Posterior vena cava (tissue), 2 donors: ENCODE measurements at regions of chr5 and their contacts with region 1.

Region 1: GRCh38 chr5:149471406-149472183 is 79.6 kb downstream of the CSNK1A1 start:
- DNase-seq: peak; percentile 81

Region 2: DNA sequence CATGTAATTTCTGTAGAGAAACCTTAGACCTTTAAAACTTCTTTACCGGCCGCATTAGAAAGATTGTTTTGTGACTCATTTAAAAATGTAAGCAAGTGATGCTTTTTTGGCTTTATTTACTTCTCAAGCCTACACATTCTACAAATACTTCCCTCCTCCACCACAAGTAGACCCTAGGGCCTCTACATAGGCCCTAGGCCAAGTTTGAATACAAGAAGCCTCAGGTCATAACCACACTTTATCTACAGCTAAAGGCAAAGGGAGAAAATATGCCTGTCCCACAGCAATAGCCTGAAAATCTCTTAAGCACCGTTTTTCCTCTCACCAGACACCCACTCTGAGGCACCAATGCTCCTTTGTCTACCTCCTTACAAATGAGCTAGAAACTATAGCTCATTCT is 25.8 kb after region 1 on chr5:
- intact Hi-C with region 1: loop called in 1 of 2 experiments (anchors 2 kb)
- DNase-seq: no peak